Left lung (tissue), 14 donors: ENCODE measurements at regions of chr15 and their contacts with region 1.

Region 1: DNA sequence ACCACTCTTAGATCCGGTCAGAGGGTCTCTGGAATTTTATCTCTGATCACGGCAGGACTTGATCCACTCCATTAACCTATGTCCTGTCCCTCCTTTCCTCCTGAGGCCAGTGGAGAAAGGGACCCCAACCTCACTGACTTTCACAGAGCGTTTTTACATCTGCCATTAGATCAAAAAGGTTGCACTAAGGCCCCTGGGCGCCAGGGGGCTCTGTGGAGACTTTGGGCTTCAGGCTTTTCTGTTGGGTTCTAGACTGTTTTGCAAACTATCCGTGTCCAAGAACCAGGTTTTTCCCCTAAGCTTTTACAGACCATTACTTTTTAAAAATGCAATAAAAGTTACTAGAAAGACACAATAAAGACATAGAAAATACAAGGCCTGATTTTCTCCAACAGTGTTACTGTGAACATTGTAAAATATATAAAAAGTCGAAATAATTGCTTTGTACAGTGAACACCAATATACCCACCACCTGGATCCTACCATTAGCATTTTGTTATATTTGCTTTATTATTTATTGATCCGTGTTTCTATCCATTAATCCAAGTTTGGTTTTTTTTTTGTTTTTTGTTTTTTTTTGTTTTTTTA is 159.7 kb downstream of the POLR2M start:
- DNase-seq: peak in 2 of 4 donors; percentile 35 to 78
- ATAC-seq: peak; percentile 91
- H3K4me3 ChIP-seq: no peak overlapping the region
- H3K27ac ChIP-seq: no peak overlapping the region
- H3K4me1 ChIP-seq: no peaks in the 10 kb centered on the region
- H3K27me3 ChIP-seq: peaks cover 0 to 33% of the 10 kb centered on the region in 2 donors
- CTCF ChIP-seq: peak; percentile 51 to 52

Region 2: DNA sequence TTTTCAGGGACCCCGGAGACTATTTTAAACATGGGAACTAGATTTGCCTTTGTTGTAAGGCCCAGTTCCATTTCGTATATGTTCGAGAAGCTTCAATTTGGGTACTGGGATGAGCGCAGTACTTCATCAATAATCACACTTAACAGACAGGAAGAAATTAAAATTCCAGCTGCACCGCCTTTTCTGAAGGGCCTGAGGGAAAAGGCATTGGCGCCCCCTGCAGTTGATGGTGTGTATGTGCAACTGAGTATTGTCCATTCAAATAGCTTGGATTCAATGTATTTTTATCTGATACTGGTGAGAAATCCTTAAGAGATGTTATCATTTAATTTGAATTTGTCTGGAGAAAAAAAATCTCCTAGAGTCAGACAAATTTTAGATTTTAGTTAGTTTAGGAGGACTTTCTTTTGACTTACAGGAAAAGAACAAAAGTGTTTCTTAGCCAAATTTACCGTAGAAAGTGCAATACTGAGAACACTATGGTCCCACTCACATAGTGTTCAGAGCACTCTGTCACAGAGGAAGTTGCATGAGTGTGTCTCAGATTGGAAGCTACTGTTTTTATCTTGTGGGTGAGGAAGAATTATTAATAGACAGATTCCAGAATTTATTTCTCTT is 204.7 kb after region 1 on chr15:
- intact Hi-C with region 1: loop called in 1 of 2 experiments (anchors 10 kb)
- DNase-seq: peak in 3 of 4 donors; percentile 47 to 75 (median 73)
- ATAC-seq: peak; percentile 74
- H3K4me3 ChIP-seq: no peak overlapping the region
- H3K27ac ChIP-seq: no peak overlapping the region
- H3K4me1 ChIP-seq: peaks cover 3 to 8% of the 10 kb centered on the region in 2 donors
- H3K27me3 ChIP-seq: peaks cover 17 to 63% of the 10 kb centered on the region in 2 donors
- CTCF ChIP-seq: peak; percentile 80 to 82